Activated T-helper 1 cell treated with anti-CD3 and anti-CD28 coated beads, Interleukin-12 subunit alpha, Interleukin-12 subunit beta, Interleukin-2, Interleukin-4 antibody, amounts not matched to agents 30 ng/mL and 10 ng/mL and 1 ng/mL, durations not matched to agents 14 hours and 24 hours and 36 hours (primary cell): ENCODE measurements at regions of chr6 and their contacts with region 1.

Region 1: DNA sequence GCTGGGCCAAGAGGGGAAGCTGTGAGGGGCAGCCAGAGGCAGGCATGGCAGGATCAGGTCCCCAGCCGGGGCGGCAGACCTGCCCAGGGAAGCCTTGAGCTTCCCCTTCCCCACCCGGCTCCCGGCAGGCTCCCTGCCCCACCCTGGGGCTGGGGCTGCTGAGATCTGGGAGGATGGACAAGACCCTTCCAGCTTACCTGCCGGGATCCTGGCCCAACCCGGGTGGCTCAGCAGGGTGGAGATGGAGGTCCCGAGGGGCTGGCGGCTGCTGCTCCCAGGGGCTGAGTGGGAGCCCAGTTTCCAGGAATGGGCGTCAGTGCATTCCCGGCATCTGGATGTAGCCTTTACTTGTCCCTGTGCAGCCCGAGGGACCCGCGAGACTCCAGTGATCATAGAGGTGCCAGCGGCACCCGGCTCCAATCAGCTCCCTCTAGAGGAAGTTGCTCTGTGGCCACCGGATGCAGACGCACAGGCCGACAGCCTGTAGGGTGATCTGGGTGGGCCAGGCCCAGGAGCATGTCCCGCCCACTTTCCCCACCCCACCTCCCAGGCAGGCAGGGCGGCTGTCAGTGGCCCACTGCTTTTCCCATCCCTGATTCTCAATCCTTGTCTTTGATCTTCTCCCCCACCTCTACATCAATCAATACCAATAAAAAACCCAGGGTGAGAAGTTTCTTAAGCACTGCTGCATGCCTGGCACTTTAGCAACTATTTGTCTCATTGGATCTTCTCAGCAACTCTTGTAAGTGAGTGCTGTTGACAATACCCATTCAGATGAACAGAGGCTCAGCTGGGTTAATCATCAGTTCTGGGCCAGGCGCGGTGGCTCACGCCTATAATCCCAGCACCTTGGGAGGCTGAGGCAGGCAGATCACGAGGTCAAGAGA is at the start of gene BAK1:
- DNase-seq: peak; percentile 81
- H3K4me3 Mint-ChIP-seq: peak within 1 kb of the TSS; percentile 90
- H3K27ac Mint-ChIP-seq: peak within 1 kb of the TSS; percentile 90
- H3K4me1 Mint-ChIP-seq: peaks cover 43% of the 10 kb centered on the region
- H3K27me3 Mint-ChIP-seq: no peaks in the 10 kb centered on the region
- total RNA-seq, gene BAK1: 67.0 and 67.9 TPM in 2 replicates

Region 2: DNA sequence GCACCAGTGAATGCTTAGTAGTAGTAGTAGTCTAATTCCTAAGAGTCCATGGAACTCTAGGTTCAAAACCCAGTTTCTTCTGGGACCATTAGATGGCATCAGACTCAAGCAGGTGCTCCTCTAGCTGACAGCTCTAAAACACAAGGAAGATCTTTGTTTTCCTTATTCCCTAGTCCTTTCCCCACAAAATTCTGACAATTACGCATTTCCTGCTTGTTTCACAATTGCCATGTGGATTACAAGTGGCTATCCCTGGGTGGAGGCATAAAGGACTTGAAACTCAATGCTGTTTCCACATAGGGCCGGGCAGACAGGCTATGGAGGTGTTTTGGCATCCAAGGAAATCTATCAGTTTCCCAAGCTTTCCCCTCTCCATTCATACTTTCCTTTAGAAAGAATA is 754.1 kb before region 1 on chr6:
- intact Hi-C with region 1: no loop called
- DNase-seq: no peak
- H3K4me3 Mint-ChIP-seq: no peak overlapping the region
- H3K27ac Mint-ChIP-seq: no peak overlapping the region
- H3K4me1 Mint-ChIP-seq: peaks cover 40% of the 10 kb centered on the region
- H3K27me3 Mint-ChIP-seq: no peaks in the 10 kb centered on the region

Region 3: GRCh38 chr6:33535104-33535603 is 44.9 kb before region 1 on chr6:
- intact Hi-C with region 1: loop called (anchors 1 kb)
- DNase-seq: no peak
- H3K4me3 Mint-ChIP-seq: no peak overlapping the region
- H3K27ac Mint-ChIP-seq: no peak overlapping the region
- H3K4me1 Mint-ChIP-seq: peaks cover 24% of the 10 kb centered on the region
- H3K27me3 Mint-ChIP-seq: no peaks in the 10 kb centered on the region

Region 4: DNA sequence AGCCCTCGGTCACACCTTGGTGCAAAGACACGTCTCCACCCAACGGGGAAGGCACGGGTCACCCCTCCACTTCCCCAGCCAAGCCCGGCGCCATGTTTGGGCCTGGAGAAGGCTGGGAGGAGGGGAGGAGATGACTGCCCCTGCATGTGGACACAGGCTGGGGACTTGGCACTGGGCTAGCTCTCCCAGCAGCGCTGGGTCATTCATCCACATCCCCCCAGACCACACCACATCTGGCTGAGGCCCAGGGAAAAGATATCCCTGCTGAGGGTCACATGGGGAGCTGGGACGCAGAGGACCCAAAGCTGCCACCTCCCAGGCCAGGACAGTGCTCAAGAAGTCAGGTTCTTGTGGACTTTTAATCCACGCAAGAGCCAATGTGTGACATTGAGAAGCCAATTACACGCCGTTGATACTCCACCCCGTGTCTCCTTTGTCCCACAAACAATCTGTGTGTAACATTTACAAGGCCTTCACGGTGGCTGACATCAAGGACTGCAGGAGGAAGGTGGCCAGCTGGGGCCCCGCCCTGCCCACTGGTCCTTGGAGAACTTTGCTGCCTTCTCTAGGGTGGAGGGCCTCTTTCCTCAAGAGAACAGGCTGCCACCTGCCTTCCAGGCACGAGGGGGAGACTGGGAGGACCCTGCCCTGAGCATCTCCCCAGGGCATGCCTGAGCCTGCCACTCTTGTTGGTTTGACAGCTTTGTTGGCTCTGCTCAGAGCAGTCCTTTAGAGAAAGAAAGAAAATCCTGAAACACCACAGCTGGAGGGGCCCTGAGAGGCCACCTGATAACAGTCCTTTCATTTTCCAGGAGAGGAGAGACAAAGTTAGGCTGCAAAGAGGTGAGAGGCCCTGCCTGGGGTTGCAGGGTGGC is 171.9 kb after region 1 on chr6:
- intact Hi-C with region 1: no loop called
- DNase-seq: no peak
- H3K4me3 Mint-ChIP-seq: no peak overlapping the region
- H3K27ac Mint-ChIP-seq: no peak overlapping the region
- H3K4me1 Mint-ChIP-seq: no peaks in the 10 kb centered on the region
- H3K27me3 Mint-ChIP-seq: peaks cover 11% of the 10 kb centered on the region